Activated CD4-positive, alpha-beta memory T cell treated with anti-CD3 and anti-CD28 coated beads for 36 hours (primary cell): ENCODE measurements at regions of chr6 and their contacts with region 1.

Region 1: DNA sequence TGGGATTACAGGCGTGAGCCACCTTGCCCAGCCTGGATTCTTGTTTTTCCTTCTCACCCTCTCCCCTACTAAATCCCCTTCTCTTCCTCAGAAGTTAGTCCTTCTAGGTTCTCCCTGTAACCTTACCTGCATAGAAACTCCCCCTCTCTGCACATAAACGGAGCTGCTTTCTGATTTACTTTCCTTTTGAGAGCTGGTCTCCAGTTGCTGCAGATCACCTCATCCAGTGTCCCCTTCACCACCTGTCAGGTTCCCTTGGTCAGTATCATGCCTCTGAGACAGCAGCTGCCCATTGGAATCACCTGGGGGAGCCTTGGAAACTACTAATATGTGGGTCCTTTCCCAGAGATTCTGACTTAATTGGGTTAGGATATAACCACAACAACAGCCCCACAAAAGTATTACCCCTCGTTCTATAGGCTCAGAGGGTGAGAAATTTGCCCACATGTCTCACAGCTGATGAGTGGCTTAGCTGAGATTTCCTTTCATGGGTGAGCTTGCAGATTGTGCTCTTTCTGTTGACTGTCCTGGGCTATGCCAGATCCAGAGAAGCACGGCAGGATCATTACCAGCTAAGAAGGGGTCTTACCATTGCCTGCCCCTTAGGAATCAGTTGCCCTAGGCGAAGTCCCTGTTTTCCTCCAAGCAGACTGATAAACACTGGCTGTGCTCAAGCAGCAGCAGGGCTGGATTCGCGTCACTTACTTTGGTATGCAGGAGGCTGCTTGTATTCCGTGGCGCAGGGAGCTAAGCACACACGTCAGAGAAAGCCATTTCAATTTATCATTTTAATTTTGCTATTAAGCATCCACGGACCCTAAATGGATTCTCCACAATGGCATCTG is 51.3 kb downstream of the AKAP12 start:
- DNase-seq: no peak
- H3K4me3 Mint-ChIP-seq: no peak overlapping the region
- H3K27ac Mint-ChIP-seq: no peak overlapping the region
- H3K4me1 Mint-ChIP-seq: peaks cover 26% of the 10 kb centered on the region
- H3K27me3 Mint-ChIP-seq: peaks cover 35% of the 10 kb centered on the region

Region 2: DNA sequence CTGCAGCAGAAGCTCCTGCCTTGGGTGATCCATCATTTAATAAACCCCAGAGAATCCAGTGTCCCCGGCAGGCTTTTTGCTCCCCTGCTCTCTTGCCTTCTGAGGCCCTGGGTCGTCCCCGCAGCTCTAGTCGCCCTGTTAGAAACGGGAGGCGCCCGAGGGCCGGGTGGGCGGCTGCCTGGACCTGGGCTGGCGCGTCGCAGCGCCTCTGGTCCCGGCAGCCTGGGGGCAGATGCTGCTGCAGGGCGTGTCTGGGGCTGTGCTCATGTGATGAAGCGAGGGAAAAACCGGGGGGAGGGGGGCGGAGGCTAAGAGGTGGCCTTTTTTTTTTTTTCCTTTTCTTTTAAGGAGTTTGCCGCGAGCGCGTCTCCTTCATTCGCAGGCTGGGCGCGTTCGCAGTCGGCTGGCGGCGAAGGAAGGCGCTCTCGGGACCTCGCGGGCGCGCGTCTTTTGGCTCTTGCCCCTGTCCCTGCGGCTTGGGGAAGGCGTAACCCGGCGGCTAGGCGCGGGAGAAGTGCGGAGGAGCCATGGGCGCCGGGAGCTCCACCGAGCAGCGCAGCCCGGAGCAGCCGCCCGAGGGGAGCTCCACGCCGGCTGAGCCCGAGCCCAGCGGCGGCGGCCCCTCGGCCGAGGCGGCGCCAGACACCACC is 50.9 kb before region 1 on chr6:
- CTCF ChIA-PET with region 1: no interaction called
- POLR2A ChIA-PET with region 1: interaction called, 5 read pairs
- intact Hi-C with region 1: loop called (anchors 2 kb)
- DNase-seq: peak; percentile 71
- H3K4me3 Mint-ChIP-seq: peak overlapping the region; percentile 80
- H3K27ac Mint-ChIP-seq: no peak overlapping the region
- H3K4me1 Mint-ChIP-seq: peaks cover 13% of the 10 kb centered on the region
- H3K27me3 Mint-ChIP-seq: peaks cover 59% of the 10 kb centered on the region